PC-9 (cell line): ENCODE measurements at regions of chr1 and their contacts with region 1.

Region 1: DNA sequence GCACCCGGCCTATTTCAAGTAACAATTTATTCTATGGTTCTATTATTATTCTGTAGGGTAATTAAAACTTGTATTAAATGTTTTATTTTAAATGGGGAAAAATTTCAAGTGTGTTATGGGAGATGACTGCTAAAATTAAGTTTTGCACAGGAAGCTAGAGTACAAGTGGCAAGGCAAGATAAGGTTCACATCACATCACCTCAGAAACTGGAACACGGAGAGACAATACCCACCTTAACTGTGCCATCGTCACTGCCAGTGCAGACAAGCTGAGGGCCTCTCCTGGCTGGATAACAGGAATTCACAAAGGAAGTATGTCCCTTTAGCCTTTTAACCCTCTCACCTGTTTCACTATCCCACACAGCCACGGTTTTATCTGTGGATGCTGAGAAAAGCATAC is 7.6 kb downstream of the SNRNP40 start:
- DNase-seq: no peak
- H3K4me3 ChIP-seq: no peak overlapping the region
- H3K27ac ChIP-seq: no peak overlapping the region
- H3K4me1 ChIP-seq: no peaks in the 10 kb centered on the region
- H3K27me3 ChIP-seq: no peaks in the 10 kb centered on the region
- CTCF ChIP-seq: no peak

Region 2: DNA sequence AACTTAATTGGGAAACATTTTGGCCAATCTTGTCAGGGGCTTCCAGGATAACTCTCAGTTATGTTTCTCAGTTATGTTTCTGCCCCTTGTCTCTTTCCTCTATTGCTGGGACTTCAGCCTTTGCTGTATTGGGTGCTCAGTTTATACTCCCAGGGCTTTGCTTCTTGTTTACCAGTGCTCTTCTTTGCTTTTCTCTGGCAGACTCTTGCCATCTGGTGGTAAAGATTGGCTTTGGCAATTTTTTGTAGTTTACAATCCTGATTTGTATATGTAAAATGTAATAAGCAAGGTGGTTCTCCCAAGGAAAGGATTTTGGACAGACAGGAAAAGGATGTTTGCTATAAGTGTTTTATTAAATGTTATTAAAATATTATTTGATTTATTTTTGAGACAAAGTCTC is 46.0 kb after region 1 on chr1:
- CTCF ChIA-PET with region 1: no interaction called
- POLR2A ChIA-PET with region 1: no interaction called
- intact Hi-C with region 1: loop called (anchors 2 kb)
- DNase-seq: no peak
- H3K4me3 ChIP-seq: no peak overlapping the region
- H3K27ac ChIP-seq: no peak overlapping the region
- H3K4me1 ChIP-seq: no peaks in the 10 kb centered on the region
- H3K27me3 ChIP-seq: no peaks in the 10 kb centered on the region
- CTCF ChIP-seq: peak; percentile 54